ENCODE measurements at regions of chr1 and their contacts with region 1.

Region 1: GRCh38 chr1:38818175-38818976 is 41.2 kb downstream of the RRAGC start:
- ATAC-seq: peak; percentile 69 to 88 (median 72)
- H3K4me3 ChIP-seq: peak overlapping the region; percentile 22 to 38 (median 26)
- H3K27ac ChIP-seq: no peak overlapping the region
- H3K4me1 ChIP-seq: peaks cover 55 to 78% of the 10 kb centered on the region in 2 donors

Region 2: DNA sequence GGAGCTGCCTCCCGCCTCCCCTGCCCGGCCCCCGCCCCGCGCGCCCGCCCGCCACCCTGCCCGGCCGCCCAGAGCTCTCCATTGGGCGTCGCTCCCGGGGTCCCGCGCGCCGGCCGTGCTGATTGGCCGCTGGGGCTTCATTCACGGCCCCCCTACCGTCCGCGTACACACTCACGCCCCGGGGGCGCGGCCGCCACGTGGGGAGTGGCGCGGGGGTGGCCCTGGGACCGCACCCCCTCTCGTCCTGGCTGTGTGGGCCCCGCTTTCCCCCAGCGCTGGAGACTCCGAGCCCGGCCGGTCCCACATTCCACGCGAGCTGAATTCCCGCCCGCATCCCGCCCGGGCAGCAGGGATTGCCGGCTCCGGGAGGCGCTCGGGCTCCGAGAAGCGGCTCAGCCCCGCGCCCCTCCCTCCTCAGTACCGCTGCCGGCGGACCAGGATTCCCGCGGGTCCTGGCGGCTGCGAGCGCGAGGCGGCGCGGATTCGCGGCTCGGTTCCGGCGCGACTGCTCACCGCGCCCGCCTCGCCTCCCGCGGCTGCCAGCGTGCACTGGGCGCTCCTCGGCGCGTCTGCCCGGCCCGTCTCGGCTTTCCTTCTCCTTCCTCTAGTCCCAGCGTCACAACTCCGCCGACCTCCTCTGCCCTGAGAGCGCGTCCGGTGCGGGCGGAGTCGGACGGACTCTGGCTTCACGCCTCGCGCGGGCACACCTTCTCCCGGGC is 771.3 kb before region 1 on chr1:
- in situ Hi-C with region 1: loop called in 4 of 9 experiments (anchors 25 kb)
- ATAC-seq: peak; percentile 75 to 86 (median 82)
- H3K4me3 ChIP-seq: peak overlapping the region; percentile 40 to 47 (median 43)
- H3K27ac ChIP-seq: no peak overlapping the region
- H3K4me1 ChIP-seq: peaks cover 45 to 48% of the 10 kb centered on the region in 2 donors

Region 3: GRCh38 chr1:38221006-38221649 is 597.2 kb before region 1 on chr1:
- in situ Hi-C with region 1: loop called in 1 of 9 experiments (anchors 25 kb)
- ATAC-seq: peak in 4 of 8 experiments; percentile 20 to 87 (median 60)
- H3K4me3 ChIP-seq: no peak overlapping the region
- H3K27ac ChIP-seq: no peak overlapping the region
- H3K4me1 ChIP-seq: peaks cover 0 to 20% of the 10 kb centered on the region in 2 donors

Region 4: GRCh38 chr1:38353956-38354355 is 464.4 kb before region 1 on chr1:
- in situ Hi-C with region 1: loop called in 1 of 9 experiments (anchors 10 kb)
- ATAC-seq: no peak
- H3K4me3 ChIP-seq: no peak overlapping the region
- H3K27ac ChIP-seq: no peak overlapping the region
- H3K4me1 ChIP-seq: peaks cover 0 to 3% of the 10 kb centered on the region in 2 donors

Region 5: GRCh38 chr1:38559161-38559824 is 259.1 kb before region 1 on chr1:
- in situ Hi-C with region 1: loop called in 1 of 9 experiments (anchors 25 kb)
- ATAC-seq: no peak
- H3K4me3 ChIP-seq: peak overlapping the region in 1 of 5 donors; percentile 0
- H3K27ac ChIP-seq: peak overlapping the region; percentile 70 to 79
- H3K4me1 ChIP-seq: peaks cover 58 to 69% of the 10 kb centered on the region in 2 donors

Region 6: DNA sequence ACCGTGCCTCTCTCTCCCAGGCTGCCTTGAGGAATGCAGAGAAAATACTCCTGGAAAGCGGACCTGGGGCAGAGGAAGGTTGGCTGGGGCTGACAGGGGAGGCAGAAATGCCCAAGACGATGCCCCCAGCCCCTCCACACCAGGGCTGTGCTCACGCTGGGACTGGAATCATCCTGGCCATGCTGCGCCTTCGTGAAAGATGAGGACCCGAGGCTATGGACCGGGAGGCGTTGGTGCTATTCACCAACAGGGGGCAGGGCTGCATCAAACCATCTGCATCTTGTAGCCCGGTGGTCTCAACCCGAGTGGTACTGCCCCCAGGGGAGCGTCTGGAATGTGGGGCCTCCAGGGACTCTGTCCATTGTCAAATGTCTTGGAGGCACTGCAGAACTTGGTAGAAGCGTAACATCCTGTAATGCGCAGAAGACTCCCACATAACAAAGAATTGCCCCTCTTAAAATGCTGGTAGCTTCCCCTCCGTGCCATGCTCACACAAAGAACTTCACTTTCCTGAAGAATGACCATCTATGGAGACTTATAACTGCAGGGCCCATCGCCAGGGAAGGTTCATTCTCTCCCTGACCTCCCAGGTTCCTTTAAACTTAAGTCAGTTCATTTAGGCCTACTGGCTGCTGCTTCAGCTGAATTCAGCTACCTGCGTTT is 210.0 kb before region 1 on chr1:
- in situ Hi-C with region 1: loop called in 4 of 9 experiments (anchors 25 kb)
- ATAC-seq: peak in 7 of 8 experiments; percentile 23 to 82 (median 71)
- H3K4me3 ChIP-seq: no peak overlapping the region
- H3K27ac ChIP-seq: no peak overlapping the region
- H3K4me1 ChIP-seq: peaks cover 13 to 36% of the 10 kb centered on the region in 2 donors

Region 7: GRCh38 chr1:38898653-38899230 is 80.4 kb after region 1 on chr1:
- in situ Hi-C with region 1: no loop called
- ATAC-seq: no peak
- H3K4me3 ChIP-seq: no peak overlapping the region
- H3K27ac ChIP-seq: no peak overlapping the region
- H3K4me1 ChIP-seq: no peaks in the 10 kb centered on the region

Measured in motor neuron (in vitro differentiated cells).